ENCODE measurements at regions of chr2 and their contacts with region 1.

Region 1: GRCh38 chr2:39403311-39403710 is 33.8 kb downstream of the MAP4K3 start:
- DNase-seq: peak; percentile 23
- ATAC-seq: no peak
- H3K4me3 ChIP-seq: no peak overlapping the region
- H3K27ac ChIP-seq: 0 out of 2 replicates have a peak overlapping the region, but pooled peaks have one; percentile 7
- H3K4me1 ChIP-seq: peaks cover 33% of the 10 kb centered on the region
- H3K27me3 ChIP-seq: no peaks in the 10 kb centered on the region
- CTCF ChIP-seq: no peak
- POLR2A ChIP-seq: no peak
- RAD21 ChIP-seq: no peak

Region 2: DNA sequence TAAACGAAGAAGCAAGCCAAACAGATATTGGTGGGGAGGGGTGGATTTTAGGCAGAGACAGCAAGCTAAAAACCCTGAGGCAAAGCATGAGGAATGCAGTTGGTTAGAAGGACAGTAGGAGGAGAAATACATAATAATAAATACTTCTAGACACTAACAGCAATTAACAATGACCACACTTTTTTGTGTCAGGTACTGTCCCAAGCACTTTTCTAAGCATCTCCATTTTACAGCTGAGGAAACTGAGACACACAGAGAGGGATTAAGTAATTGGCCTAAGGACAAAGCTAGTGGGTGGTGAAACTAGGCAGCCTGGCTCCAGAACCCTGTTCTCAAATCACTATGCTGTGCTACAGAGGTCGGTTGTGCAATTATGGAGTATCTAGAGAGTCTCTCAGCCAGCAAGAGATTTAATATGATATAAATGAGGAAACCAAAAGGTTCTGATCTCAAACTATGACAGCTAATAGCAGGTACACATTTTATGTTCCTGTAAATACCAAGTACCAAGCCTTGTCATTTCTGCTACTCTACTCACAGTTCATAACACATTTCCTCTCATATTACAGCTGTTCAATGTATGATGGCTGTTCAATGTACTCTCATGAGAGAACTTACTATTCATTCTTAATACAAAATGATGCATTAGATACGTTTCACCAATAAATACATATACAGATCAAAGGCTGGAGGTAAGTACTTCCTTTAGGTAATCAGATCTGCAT is 28.4 kb after region 1 on chr2:
- CTCF ChIA-PET with region 1: interaction called, 3 read pairs
- POLR2A ChIA-PET with region 1: interaction called, 7 read pairs
- dilution Hi-C with region 1: no loop called
- in situ Hi-C with region 1: no loop called
- intact Hi-C with region 1: loop called (anchors 5 kb)
- DNase-seq: peak; percentile 45
- ATAC-seq: peak; percentile 31
- H3K4me3 ChIP-seq: no peak overlapping the region
- H3K27ac ChIP-seq: peak overlapping the region; percentile 44; the same call in 1 of the 2 replicates
- H3K4me1 ChIP-seq: peaks cover 14% of the 10 kb centered on the region
- H3K27me3 ChIP-seq: no peaks in the 10 kb centered on the region
- CTCF ChIP-seq: no peak
- POLR2A ChIP-seq: no peak
- RAD21 ChIP-seq: no peak